ENCODE measurements at regions of chr11 and their contacts with region 1.

Region 1: GRCh38 chr11:87173185-87174039 is 135.7 kb downstream of the TMEM135 start:
- DNase-seq: peak; percentile 87
- ATAC-seq: peak; percentile 95
- H3K4me3 ChIP-seq: 0 out of 2 replicates have a peak overlapping the region, but pooled peaks have one; percentile 20
- H3K27ac ChIP-seq: peak overlapping the region; percentile 80
- H3K4me1 ChIP-seq: peaks cover 27% of the 10 kb centered on the region
- H3K27me3 ChIP-seq: no peaks in the 10 kb centered on the region
- CTCF ChIP-seq: no peak

Region 2: GRCh38 chr11:87097582-87097981 is 75.8 kb before region 1 on chr11:
- CTCF ChIA-PET with region 1: no interaction called
- POLR2A ChIA-PET with region 1: no interaction called
- intact Hi-C with region 1: loop called (anchors 5 kb)
- DNase-seq: peak; percentile 76
- ATAC-seq: peak; percentile 79; the same call in 1 of the 2 replicates
- H3K4me3 ChIP-seq: no peak overlapping the region
- H3K27ac ChIP-seq: no peak overlapping the region
- H3K4me1 ChIP-seq: no peaks in the 10 kb centered on the region
- H3K27me3 ChIP-seq: no peaks in the 10 kb centered on the region
- CTCF ChIP-seq: peak; percentile 94

Region 3: GRCh38 chr11:87228820-87229219 is 55.4 kb after region 1 on chr11:
- CTCF ChIA-PET with region 1: no interaction called
- POLR2A ChIA-PET with region 1: no interaction called
- intact Hi-C with region 1: loop called (anchors 5 kb)
- DNase-seq: peak; percentile 39
- ATAC-seq: peak; percentile 81
- H3K4me3 ChIP-seq: no peak overlapping the region
- H3K27ac ChIP-seq: no peak overlapping the region
- H3K4me1 ChIP-seq: no peaks in the 10 kb centered on the region
- H3K27me3 ChIP-seq: no peaks in the 10 kb centered on the region
- CTCF ChIP-seq: no peak